Activated naive CD4-positive, alpha-beta T cell treated with anti-CD3 and anti-CD28 coated beads, Interleukin-2, amount 10 ng/mL, durations not matched to agents 7 days and 5 days (primary cell): ENCODE measurements at regions of chr1 and their contacts with region 1.

Region 1: GRCh38 chr1:154419620-154420571 is 14.8 kb downstream of the IL6R start:
- DNase-seq: peak; percentile 59
- H3K4me3 Mint-ChIP-seq: peak overlapping the region; percentile 4
- H3K27ac Mint-ChIP-seq: peak overlapping the region; percentile 81
- H3K4me1 Mint-ChIP-seq: peaks cover 45% of the 10 kb centered on the region
- H3K27me3 Mint-ChIP-seq: no peaks in the 10 kb centered on the region

Region 2: DNA sequence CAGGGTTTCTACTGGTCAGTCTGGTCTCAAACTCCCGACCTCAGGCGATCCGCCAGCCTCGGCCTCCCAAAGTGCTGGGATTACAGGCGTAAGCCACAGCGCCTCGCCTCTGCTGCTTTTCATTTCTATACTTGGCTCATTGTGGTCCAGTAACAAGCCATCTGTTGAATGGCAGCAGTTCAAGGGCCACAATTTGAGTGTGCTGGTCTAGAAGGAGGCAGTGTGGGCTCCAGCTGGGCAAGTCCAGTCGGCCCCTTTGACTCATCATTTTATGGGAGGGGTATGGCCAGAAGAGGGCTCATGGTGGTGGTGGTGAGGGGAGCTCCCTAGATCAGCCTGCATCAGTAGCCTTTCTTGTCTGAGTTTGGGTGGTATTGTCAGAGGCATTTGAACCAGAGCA is 61.4 kb before region 1 on chr1:
- CTCF ChIA-PET with region 1: no interaction called
- DNase-seq: no peak
- H3K4me3 Mint-ChIP-seq: no peak overlapping the region
- H3K27ac Mint-ChIP-seq: no peak overlapping the region
- H3K4me1 Mint-ChIP-seq: peaks cover 12% of the 10 kb centered on the region
- H3K27me3 Mint-ChIP-seq: peaks cover 27% of the 10 kb centered on the region

Region 3: DNA sequence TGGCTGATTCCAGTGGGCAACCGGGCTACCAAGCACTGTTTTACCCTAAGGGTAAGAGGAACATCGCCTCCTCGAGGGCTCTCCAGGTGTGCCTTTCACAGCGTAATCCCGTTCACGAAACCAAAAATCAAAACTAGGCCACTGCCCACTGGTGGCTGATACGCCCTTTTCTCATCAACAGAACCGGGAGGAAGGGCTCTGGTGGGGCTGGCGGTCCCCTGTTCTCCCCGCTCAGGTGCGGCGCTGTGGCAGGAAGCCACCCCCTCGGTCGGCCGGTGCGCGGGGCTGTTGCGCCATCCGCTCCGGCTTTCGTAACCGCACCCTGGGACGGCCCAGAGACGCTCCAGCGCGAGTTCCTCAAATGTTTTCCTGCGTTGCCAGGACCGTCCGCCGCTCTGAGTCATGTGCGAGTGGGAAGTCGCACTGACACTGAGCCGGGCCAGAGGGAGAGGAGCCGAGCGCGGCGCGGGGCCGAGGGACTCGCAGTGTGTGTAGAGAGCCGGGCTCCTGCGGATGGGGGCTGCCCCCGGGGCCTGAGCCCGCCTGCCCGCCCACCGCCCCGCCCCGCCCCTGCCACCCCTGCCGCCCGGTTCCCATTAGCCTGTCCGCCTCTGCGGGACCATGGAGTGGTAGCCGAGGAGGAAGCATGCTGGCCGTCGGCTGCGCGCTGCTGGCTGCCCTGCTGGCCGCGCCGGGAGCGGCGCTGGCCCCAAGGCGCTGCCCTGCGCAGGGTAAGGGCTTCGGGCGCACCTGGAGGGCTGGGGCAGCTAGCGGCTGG is 14.7 kb before region 1 on chr1 and contains the start of gene IL6R:
- CTCF ChIA-PET with region 1: interaction called, 11 read pairs
- DNase-seq: peak; percentile 81
- H3K4me3 Mint-ChIP-seq: peak within 1 kb of the TSS; percentile 84
- H3K27ac Mint-ChIP-seq: peak within 1 kb of the TSS; percentile 88
- H3K4me1 Mint-ChIP-seq: peaks cover 91% of the 10 kb centered on the region
- H3K27me3 Mint-ChIP-seq: peaks cover 18% of the 10 kb centered on the region

Region 4: DNA sequence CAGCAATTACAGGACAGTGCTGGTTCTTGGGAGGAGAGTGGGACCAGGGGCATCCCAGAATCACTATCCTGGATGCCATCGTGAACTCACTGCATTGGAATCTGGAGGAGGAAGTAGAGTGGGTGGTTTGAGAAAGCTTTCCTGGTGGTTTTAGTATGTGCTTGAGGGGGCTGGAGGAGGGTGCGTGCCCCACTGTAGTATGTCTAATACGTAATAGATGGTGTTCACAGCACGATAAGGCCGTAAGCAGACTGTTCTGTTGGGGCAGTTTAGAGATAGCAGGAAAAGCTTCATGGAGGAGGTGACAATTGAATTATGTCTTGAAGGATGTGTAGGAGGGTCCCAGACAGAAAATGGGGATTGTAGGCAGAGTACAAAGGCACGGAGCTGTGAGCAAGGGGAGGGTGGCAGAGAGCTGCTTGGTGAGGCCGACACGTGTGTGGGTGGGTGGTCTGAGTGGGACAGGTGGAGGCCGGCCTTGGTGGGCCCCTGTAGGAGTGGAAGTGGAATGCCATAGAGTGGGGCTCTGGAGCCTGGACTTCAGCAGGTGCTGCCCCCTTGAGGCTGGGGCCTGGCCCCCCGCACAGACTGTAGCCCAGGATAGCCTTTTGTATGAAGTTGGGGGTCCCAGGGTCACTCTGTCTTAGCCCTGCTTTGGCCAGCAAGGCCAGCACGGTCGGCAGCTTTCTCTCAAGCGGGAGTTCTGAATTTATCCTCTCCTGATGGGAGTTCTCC is 22.3 kb after region 1 on chr1:
- CTCF ChIA-PET with region 1: no interaction called
- DNase-seq: no peak
- H3K4me3 Mint-ChIP-seq: no peak overlapping the region
- H3K27ac Mint-ChIP-seq: no peak overlapping the region
- H3K4me1 Mint-ChIP-seq: peaks cover 59% of the 10 kb centered on the region
- H3K27me3 Mint-ChIP-seq: peaks cover 15% of the 10 kb centered on the region

Region 5: GRCh38 chr1:154501423-154502065 is 81.6 kb after region 1 on chr1:
- CTCF ChIA-PET with region 1: no interaction called
- DNase-seq: no peak
- H3K4me3 Mint-ChIP-seq: peak overlapping the region; percentile 11
- H3K27ac Mint-ChIP-seq: no peak overlapping the region
- H3K4me1 Mint-ChIP-seq: peaks cover 14% of the 10 kb centered on the region
- H3K27me3 Mint-ChIP-seq: peaks cover 78% of the 10 kb centered on the region